Breast epithelium (tissue), 4 donors: ENCODE measurements at regions of chr6 and their contacts with region 1.

Region 1: GRCh38 chr6:13668291-13668928 is 43.2 kb downstream of the RANBP9 start:
- DNase-seq: no peak
- H3K4me3 ChIP-seq: no peak overlapping the region
- H3K27ac ChIP-seq: no peak overlapping the region
- H3K4me1 ChIP-seq: no peaks in the 10 kb centered on the region
- H3K27me3 ChIP-seq: no peaks in the 10 kb centered on the region
- CTCF ChIP-seq: no peak
- POLR2A ChIP-seq: no peak

Region 2: GRCh38 chr6:13725570-13725969 is 57.2 kb after region 1 on chr6:
- intact Hi-C with region 1: loop called (anchors 2 kb)
- DNase-seq: peak in 1 of 2 donors; percentile 67
- H3K4me3 ChIP-seq: no peak overlapping the region
- H3K27ac ChIP-seq: peak overlapping the region; percentile 80
- H3K4me1 ChIP-seq: no peaks in the 10 kb centered on the region
- H3K27me3 ChIP-seq: no peaks in the 10 kb centered on the region
- CTCF ChIP-seq: no peak
- POLR2A ChIP-seq: no peak